ENCODE measurements at regions of chr6 and their contacts with region 1.

Region 1: DNA sequence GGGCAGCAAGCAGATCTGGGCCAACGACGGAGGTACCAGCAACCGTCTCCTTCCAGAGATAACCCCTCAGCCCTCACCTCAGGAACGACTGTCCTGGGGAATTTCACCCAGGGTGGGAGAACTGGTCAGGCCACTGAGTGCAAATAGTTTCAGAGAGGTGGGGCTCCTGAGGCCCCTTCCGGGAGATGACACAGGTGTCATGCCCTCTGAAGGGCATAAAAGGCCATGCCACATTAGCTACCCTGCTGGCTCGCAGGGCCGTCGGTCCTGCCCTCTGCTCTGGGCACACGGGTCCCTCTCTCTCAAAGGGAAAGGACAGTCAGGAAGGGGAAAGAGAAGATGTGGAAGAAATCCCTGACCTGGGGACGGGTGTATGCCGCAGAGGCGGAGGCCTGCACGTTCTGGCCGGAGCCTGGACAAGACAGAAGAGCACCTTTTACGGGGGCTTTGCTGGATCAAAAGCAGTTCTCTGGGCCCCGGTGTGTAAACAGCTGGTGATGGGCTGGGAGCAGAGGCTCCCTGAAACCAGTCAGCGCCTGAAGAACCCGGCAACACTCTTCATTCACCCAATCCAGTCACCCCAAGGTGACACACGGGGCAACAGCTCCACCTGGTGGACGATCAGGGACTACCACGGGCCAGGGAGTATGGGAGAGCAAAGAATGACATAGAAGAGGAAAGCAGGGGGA is 6.4 kb upstream of the TAF8 start:
- DNase-seq: peak; percentile 92

Region 2: GRCh38 chr6:41787219-41787917 is 256.6 kb before region 1 on chr6 and contains the start of gene TOMM6:
- in situ Hi-C with region 1: loop called (anchors 10 kb)
- DNase-seq: peak; percentile 97

Region 3: GRCh38 chr6:41941280-41942066 is 102.5 kb before region 1 on chr6 and contains the start of gene CCND3:
- in situ Hi-C with region 1: loop called (anchors 25 kb)
- DNase-seq: peak; percentile 84

Measured in KBM-7 (cell line).